T-cell (primary cell): ENCODE measurements at regions of chr3 and their contacts with region 1.

Region 1: DNA sequence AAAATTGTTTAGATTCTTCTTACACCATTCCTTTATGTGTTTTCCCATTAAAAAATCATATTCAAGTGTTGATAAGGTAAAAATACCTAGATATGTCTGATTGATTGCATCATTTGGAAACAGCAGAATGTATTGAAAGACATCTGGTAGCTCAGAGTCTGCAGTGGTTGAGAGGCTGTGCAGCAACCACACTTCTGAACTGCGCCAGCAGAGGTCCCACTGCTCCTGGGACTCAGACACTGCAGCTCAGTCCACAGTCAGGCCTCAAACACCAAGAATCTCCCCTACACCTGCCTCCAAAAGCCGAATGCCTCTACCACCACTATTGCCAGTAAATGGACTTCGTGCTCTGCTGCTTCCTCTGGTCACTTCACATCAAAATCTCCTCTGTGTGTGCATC is 176.9 kb upstream of the LMCD1 start:
- DNase-seq: peak in 34 of 35 experiments; percentile 8 to 76 (median 51)
- ATAC-seq: peak; percentile 60 to 88 (median 76)
- H3K4me3 ChIP-seq: no peak overlapping the region
- H3K4me3 Mint-ChIP-seq: no peak overlapping the region
- H3K27ac ChIP-seq: no peak overlapping the region
- H3K27ac Mint-ChIP-seq: no peak overlapping the region
- H3K4me1 ChIP-seq: peaks cover 0 to 10% of the 10 kb centered on the region in 2 experiments
- H3K4me1 Mint-ChIP-seq: peaks cover 17 to 24% (median 24%) of the 10 kb centered on the region in 3 donors
- H3K27me3 ChIP-seq: no peaks in the 10 kb centered on the region
- H3K27me3 Mint-ChIP-seq: no peaks in the 10 kb centered on the region

Region 2: GRCh38 chr3:8143186-8143585 is 181.6 kb before region 1 on chr3:
- CTCF ChIA-PET with region 1: no interaction called
- POLR2A ChIA-PET with region 1: no interaction called
- DNase-seq: no peak
- ATAC-seq: no peak
- H3K4me3 ChIP-seq: no peak overlapping the region
- H3K4me3 Mint-ChIP-seq: no peak overlapping the region
- H3K27ac ChIP-seq: no peak overlapping the region
- H3K27ac Mint-ChIP-seq: no peak overlapping the region
- H3K4me1 ChIP-seq: no peaks in the 10 kb centered on the region
- H3K4me1 Mint-ChIP-seq: no peaks in the 10 kb centered on the region
- H3K27me3 ChIP-seq: no peaks in the 10 kb centered on the region
- H3K27me3 Mint-ChIP-seq: peaks cover 3 to 10% of the 10 kb centered on the region in 2 donors

Region 3: GRCh38 chr3:8301728-8302462 is 22.8 kb before region 1 on chr3:
- CTCF ChIA-PET with region 1: interaction called in 1 of 2 experiments, 10 read pairs
- POLR2A ChIA-PET with region 1: interaction called in 1 of 2 experiments, 3 read pairs
- DNase-seq: peak in 2 of 35 experiments; percentile 12 to 61
- ATAC-seq: peak in 2 of 4 experiments; percentile 35 to 51
- H3K4me3 ChIP-seq: no peak overlapping the region
- H3K4me3 Mint-ChIP-seq: no peak overlapping the region
- H3K27ac ChIP-seq: no peak overlapping the region
- H3K27ac Mint-ChIP-seq: peak overlapping the region in 1 of 2 donors; percentile 55
- H3K4me1 ChIP-seq: no peaks in the 10 kb centered on the region
- H3K4me1 Mint-ChIP-seq: peaks cover 7 to 15% (median 9%) of the 10 kb centered on the region in 3 donors
- H3K27me3 ChIP-seq: no peaks in the 10 kb centered on the region
- H3K27me3 Mint-ChIP-seq: peaks cover 0 to 6% of the 10 kb centered on the region in 2 donors

Region 4: GRCh38 chr3:8357859-8358258 is 33.1 kb after region 1 on chr3:
- CTCF ChIA-PET with region 1: interaction called in 1 of 2 experiments, 13 read pairs
- POLR2A ChIA-PET with region 1: no interaction called
- DNase-seq: no peak
- ATAC-seq: no peak
- H3K4me3 ChIP-seq: no peak overlapping the region
- H3K4me3 Mint-ChIP-seq: peak overlapping the region in 2 of 3 donors; percentile 34 to 68
- H3K27ac ChIP-seq: peak overlapping the region; percentile 98
- H3K27ac Mint-ChIP-seq: peak overlapping the region; percentile 96 to 97
- H3K4me1 ChIP-seq: peaks cover 16 to 38% of the 10 kb centered on the region in 2 experiments
- H3K4me1 Mint-ChIP-seq: peaks cover 45 to 67% (median 65%) of the 10 kb centered on the region in 3 donors
- H3K27me3 ChIP-seq: no peaks in the 10 kb centered on the region
- H3K27me3 Mint-ChIP-seq: no peaks in the 10 kb centered on the region

Region 5: DNA sequence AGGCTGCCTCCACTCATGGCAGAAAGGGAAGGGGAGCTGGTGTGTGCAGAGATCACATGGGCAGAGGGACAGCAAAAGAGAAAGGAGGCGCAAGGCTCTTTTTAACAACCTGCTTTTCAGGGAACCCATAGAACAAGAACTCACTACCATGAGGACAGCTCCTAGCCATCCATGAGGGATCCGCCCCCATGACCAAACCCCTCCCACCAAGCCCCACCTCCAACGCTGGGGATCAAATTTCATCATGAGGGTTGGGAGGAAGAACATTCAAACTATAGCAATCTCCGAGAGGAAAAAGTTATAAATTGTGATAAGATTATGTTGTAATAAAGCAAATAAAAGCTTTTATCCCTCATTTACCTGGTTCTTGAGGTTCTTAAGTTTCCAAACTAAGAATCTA is 92.2 kb after region 1 on chr3:
- CTCF ChIA-PET with region 1: interaction called, 44 to 232 read pairs
- POLR2A ChIA-PET with region 1: interaction called in 1 of 2 experiments, 5 read pairs
- DNase-seq: peak in 1 of 35 experiments; percentile 6
- ATAC-seq: no peak
- H3K4me3 ChIP-seq: no peak overlapping the region
- H3K4me3 Mint-ChIP-seq: no peak overlapping the region
- H3K27ac ChIP-seq: no peak overlapping the region
- H3K27ac Mint-ChIP-seq: peak overlapping the region in 1 of 2 donors; percentile 7
- H3K4me1 ChIP-seq: no peaks in the 10 kb centered on the region
- H3K4me1 Mint-ChIP-seq: peaks cover 6 to 10% (median 9%) of the 10 kb centered on the region in 3 donors
- H3K27me3 ChIP-seq: no peaks in the 10 kb centered on the region
- H3K27me3 Mint-ChIP-seq: no peaks in the 10 kb centered on the region

Region 6: DNA sequence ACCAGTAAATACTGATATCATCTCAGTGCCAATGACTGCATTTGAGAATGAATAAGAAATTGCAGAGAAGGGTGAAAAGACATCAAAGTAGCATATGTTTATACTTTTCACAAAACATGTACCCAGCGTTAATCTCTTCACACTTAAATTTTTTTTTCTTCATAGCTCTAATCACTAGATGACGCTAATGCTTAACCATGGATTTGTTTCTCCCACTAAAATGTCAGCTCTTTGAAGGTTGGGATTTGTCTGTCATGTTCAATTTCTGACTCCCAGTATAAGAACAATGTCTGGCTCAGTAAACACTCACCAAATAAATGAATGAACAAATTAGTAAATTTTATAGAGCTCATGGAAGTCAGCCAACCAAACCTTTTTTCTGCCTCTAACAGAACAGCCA is 98.6 kb after region 1 on chr3:
- CTCF ChIA-PET with region 1: interaction called, 44 to 232 read pairs
- POLR2A ChIA-PET with region 1: no interaction called
- DNase-seq: no peak
- ATAC-seq: no peak
- H3K4me3 ChIP-seq: no peak overlapping the region
- H3K4me3 Mint-ChIP-seq: no peak overlapping the region
- H3K27ac ChIP-seq: no peak overlapping the region
- H3K27ac Mint-ChIP-seq: no peak overlapping the region
- H3K4me1 ChIP-seq: no peaks in the 10 kb centered on the region
- H3K4me1 Mint-ChIP-seq: no peaks in the 10 kb centered on the region
- H3K27me3 ChIP-seq: no peaks in the 10 kb centered on the region
- H3K27me3 Mint-ChIP-seq: no peaks in the 10 kb centered on the region

Region 7: GRCh38 chr3:9135930-9136525 is 811.3 kb after region 1 on chr3:
- CTCF ChIA-PET with region 1: no interaction called
- POLR2A ChIA-PET with region 1: no interaction called
- DNase-seq: no peak
- ATAC-seq: peak in 2 of 4 experiments; percentile 19 to 43
- H3K4me3 ChIP-seq: no peak overlapping the region
- H3K4me3 Mint-ChIP-seq: peak overlapping the region in 1 of 3 donors; percentile 58
- H3K27ac ChIP-seq: no peak overlapping the region
- H3K27ac Mint-ChIP-seq: no peak overlapping the region
- H3K4me1 ChIP-seq: peaks cover 0 to 5% of the 10 kb centered on the region in 2 experiments
- H3K4me1 Mint-ChIP-seq: peaks cover 0 to 2% (median 2%) of the 10 kb centered on the region in 3 donors
- H3K27me3 ChIP-seq: peaks cover 2 to 13% of the 10 kb centered on the region in 2 experiments
- H3K27me3 Mint-ChIP-seq: peaks cover 13 to 34% of the 10 kb centered on the region in 2 donors